ENCODE measurements at regions of chr9 and their contacts with region 1.

Region 1: DNA sequence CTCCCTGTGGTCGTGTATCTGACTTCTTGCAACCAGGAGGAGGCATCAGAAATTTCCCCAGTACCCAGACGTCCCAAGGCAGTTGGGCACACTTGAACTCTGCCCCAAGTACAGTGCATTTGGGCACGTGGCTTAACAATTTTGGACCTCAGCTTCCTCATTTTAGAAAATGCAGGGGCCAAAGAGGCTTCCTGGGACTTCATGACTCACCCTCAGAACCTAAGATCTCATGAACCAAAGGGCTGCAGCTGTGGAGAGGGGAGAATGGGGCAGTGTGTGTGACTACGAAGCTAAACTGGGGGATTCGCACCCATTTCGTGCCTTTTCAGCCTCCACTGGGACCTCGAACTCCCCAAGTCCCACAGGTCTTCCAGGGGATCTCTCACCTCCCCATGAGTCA is 59.2 kb downstream of the SYK start:
- DNase-seq: no peak
- H3K4me3 ChIP-seq: no peak overlapping the region
- H3K27ac ChIP-seq: no peak overlapping the region
- H3K4me1 ChIP-seq: no peaks in the 10 kb centered on the region
- H3K27me3 ChIP-seq: peaks cover 16% of the 10 kb centered on the region; the same call in 1 of the 2 replicates

Region 2: DNA sequence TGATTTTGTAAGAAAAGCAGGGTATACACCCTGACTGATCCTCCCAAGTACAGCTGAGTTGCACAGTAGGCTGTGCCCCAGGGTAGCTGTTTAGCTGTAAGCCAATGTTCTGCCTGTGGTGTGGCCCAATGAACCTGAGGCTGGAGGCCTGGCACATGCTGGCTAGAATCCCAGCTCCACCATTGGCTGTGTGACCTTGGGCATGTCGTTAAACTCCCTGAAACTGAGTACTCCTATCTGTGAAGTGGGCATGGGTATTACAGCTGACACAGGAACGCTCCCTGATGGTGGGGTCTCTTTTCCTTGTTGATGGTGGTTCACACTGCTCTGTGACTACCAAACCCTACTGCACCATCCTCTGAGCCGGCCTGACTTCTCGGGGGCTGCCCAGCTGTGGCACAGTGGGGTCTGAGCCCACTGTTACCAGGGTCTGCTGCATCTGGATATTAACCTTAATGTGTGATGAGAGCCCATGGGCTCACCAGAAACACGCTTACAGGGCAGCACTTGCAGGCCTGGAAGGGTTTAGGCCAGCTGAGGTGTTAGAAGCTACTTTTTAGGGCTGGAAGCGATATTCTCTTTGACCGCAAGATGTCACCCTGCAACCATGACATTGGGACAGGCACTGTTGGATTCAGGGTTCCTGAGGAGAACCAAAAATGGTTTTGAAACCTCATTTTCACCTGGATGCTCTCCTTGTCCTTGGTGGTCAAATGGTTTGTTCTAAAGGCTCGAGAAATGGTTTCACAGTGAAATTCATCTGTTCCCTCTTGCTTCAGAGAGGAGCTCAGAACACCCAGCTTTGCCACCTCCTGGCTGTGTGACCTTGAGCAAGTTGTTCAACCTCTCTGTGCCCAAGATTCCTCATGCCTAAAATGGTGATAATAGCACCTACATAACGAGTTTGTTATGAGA is 1262.9 kb before region 1 on chr9:
- in situ Hi-C with region 1: loop called (anchors 10 kb)
- DNase-seq: peak; percentile 68
- H3K4me3 ChIP-seq: no peak overlapping the region
- H3K27ac ChIP-seq: no peak overlapping the region
- H3K4me1 ChIP-seq: no peaks in the 10 kb centered on the region
- H3K27me3 ChIP-seq: peaks cover 18% of the 10 kb centered on the region; the same call in 1 of the 2 replicates

Region 3: DNA sequence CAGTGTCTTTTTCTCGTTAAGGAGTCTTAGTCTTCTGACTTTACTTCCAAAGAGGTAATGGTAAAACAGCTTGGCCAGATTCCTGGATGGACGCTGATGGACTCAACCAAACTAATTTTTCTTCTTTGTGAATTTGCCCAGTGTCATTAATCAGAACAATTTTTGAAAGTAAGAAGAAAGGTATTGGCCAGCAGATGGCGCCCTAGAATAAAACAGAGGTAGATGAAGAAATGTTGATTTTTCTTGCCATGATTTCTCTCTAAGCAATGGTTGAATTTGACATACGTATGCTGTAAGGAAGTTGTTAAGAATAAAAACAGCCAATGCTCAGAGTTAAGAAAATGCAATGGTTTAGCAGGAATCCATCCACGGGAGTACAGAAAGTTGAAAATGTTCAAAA is 718.2 kb before region 1 on chr9:
- in situ Hi-C with region 1: loop called (anchors 10 kb)
- DNase-seq: peak; percentile 59
- H3K4me3 ChIP-seq: no peak overlapping the region
- H3K27ac ChIP-seq: no peak overlapping the region
- H3K4me1 ChIP-seq: no peaks in the 10 kb centered on the region
- H3K27me3 ChIP-seq: no peaks in the 10 kb centered on the region; the same call in 1 of the 2 replicates

Region 4: DNA sequence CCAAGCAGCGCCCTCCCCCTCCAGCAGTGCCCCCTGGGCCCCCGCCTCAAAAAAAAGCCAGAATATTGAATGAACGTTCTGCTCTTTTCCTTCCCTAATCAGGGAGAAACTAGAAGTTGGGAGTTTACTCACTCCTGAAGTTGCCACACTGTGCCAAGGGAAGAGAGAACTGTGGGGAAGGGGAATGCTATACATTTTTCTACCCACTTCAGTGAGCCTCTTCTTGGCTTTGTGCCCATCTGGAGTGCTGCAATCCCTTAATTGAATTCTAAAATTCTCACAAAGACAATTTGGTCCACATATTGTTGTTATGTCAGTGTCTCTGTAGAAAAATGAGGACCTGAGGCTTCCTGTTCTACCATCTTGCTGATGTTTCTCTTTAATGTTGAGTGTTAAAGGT is 661.9 kb before region 1 on chr9:
- in situ Hi-C with region 1: no loop called
- DNase-seq: no peak
- H3K4me3 ChIP-seq: no peak overlapping the region
- H3K27ac ChIP-seq: no peak overlapping the region
- H3K4me1 ChIP-seq: no peaks in the 10 kb centered on the region
- H3K27me3 ChIP-seq: no peaks in the 10 kb centered on the region

Region 5: DNA sequence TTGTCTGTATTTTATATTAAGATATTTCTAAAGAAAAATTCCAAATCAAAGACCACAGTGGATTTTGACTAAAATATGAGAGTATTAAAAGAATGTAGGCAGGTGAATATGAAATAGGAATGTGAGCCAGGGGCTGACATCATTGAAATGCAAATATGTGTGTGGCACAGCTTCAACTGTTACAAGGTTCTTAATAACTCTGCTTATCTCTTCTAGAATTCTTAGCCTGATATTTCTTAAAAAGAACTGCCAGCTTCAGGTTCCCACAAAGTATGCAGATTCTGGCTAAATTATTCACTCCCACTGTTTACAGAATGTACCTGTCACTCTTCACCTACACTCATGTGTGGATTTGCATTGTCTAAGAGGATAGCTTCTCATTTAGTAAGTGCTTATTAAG is 492.6 kb before region 1 on chr9:
- in situ Hi-C with region 1: no loop called
- DNase-seq: no peak
- H3K4me3 ChIP-seq: no peak overlapping the region
- H3K27ac ChIP-seq: no peak overlapping the region
- H3K4me1 ChIP-seq: no peaks in the 10 kb centered on the region
- H3K27me3 ChIP-seq: no peaks in the 10 kb centered on the region

Region 6: GRCh38 chr9:91060503-91061343 is 199.9 kb after region 1 on chr9:
- in situ Hi-C with region 1: no loop called
- DNase-seq: peak; percentile 97
- H3K4me3 ChIP-seq: peak overlapping the region; percentile 57
- H3K27ac ChIP-seq: peak overlapping the region; percentile 93
- H3K4me1 ChIP-seq: peaks cover 32% of the 10 kb centered on the region
- H3K27me3 ChIP-seq: no peaks in the 10 kb centered on the region

Region 7: DNA sequence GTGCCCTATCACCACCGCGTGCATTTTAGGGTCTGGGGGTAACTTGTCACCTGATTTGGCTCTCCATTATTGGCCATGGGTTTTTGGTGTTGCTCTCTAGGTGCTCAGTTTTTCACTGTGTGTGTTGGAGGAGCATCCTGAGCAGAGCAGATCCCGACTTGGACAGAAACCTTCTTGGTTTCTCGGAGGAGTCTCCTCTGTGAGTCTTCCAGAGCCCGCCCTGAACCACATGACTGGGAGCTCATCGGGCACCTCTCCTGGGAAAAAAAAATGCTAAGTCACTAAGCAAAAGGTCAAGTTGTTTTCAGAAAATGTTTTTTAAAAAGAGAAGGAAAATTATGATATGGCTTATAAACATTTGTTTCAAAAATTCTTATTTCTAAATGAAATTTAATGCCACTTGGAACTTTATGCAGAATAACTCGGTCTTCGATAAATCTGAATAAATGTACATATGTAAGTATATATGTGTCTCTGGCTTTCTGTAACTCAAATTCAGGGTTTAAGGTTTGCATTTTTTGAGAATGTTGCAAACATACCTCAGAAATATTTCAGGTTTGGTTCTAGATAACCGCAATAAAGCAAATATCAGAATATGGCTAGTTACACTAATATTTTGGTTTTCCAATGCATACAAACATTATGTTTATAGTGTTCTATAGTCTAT is 245.7 kb after region 1 on chr9:
- in situ Hi-C with region 1: no loop called
- DNase-seq: no peak
- H3K4me3 ChIP-seq: no peak overlapping the region
- H3K27ac ChIP-seq: no peak overlapping the region
- H3K4me1 ChIP-seq: no peaks in the 10 kb centered on the region
- H3K27me3 ChIP-seq: no peaks in the 10 kb centered on the region